CD4-positive, alpha-beta T cell (primary cell): ENCODE measurements at regions of chr19 and their contacts with region 1.

Region 1: DNA sequence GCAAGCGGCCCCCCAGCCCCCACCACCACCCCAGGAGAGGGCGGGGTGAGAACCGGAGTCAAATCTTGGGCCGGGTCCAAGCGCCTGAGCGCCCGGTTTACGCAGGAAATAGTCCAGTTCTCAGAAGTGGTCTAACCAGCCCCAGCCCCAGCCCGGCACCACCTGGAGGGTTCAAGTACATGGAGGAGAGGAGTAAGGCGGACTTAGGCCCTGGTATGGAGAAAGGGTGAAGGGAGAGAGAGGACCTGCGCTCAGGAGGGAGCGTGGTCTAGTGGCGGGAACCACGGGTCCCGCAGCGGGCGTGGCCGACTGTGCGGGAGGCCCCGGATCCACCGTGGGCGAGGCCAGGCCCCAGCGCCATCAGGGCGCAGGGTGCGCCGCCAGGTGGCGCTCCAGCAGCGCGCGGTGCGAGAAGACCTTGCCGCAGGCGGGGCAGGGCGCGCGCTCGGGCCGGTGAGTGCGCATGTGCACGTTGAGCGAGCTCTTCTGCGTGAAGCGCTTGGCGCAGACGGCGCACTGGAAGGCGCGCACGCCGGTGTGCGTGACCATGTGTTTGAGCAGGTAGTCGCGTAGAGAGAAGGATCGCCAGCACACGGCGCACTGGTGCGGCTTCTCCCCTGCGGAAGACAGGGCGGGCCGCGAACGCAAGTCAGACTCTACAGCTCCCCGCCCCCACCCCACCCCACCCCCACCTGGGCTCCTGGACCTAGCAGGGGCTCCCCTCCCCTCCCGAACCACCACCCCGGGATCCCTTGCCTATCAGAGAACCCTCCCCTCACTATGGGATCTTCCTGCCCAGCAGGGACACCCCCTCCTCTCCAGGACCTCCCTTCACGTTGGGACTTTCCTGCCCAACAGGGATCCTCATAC is 2.1 kb upstream of the SLC27A5 start:
- DNase-seq: peak; percentile 88 to 98 (median 94)
- ATAC-seq: peak; percentile 93
- H3K4me3 ChIP-seq: peak overlapping the region; percentile 41
- H3K4me3 Mint-ChIP-seq: peak overlapping the region; percentile 82
- H3K27ac ChIP-seq: peak overlapping the region; percentile 56 to 58
- H3K27ac Mint-ChIP-seq: peak overlapping the region; percentile 78
- H3K4me1 ChIP-seq: peaks cover 49% of the 10 kb centered on the region
- H3K4me1 Mint-ChIP-seq: peaks cover 36% of the 10 kb centered on the region
- H3K27me3 ChIP-seq: no peaks in the 10 kb centered on the region
- H3K27me3 Mint-ChIP-seq: no peaks in the 10 kb centered on the region
- CTCF ChIP-seq: peak; percentile 82

Region 2: DNA sequence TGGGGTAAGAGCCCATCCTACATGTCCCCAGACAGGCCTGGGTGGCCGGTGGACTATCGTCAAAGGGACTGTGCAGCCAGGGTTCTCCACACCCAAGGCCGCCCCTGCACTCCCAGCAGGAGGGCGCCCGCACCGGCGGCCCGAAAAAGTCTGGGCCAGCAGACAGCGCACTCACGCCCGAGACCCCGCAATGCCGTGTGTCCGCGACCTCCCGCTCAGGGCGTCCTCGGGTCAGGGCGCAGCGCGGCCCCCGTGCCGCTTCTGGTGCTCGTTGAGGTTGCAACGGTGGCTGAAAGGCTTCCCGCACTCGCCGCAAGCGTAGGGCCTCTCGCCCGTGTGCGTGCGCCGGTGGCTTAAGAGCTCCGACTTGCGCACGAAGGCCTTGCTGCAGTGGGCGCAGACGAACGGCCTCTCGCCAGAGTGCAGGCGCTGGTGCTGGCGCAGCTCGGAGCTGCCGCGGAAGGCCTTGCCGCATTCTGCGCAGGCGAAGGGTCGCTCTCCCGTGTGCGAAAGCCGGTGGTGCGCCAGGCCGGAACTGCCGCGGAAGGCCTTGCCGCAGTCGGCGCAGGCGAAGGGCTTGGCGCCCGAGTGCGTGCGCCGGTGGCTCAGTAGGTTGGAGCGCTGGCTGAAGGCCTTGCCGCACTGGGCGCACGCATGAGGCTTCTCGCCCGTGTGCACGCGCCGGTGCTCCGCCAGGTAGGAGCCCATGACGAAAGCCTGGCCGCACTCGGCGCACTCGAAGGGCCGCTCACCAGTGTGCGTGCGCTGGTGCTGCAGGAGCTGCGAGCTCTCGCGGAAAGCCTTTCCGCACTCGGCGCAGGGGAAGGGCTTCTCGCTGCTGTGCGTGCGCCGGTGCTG is 157.8 kb before region 1 on chr19:
- CTCF ChIA-PET with region 1: no interaction called
- POLR2A ChIA-PET with region 1: no interaction called
- intact Hi-C with region 1: no loop called
- DNase-seq: peak in 13 of 14 experiments; percentile 15 to 72 (median 35)
- ATAC-seq: peak; percentile 76
- H3K4me3 ChIP-seq: peak overlapping the region; percentile 41
- H3K4me3 Mint-ChIP-seq: peak overlapping the region; percentile 51
- H3K27ac ChIP-seq: no peak overlapping the region
- H3K27ac Mint-ChIP-seq: no peak overlapping the region
- H3K4me1 ChIP-seq: peaks cover 31% of the 10 kb centered on the region
- H3K4me1 Mint-ChIP-seq: peaks cover 8% of the 10 kb centered on the region
- H3K27me3 ChIP-seq: peaks cover 0 to 2% of the 10 kb centered on the region in 2 experiments
- H3K27me3 Mint-ChIP-seq: no peaks in the 10 kb centered on the region
- CTCF ChIP-seq: no peak

Region 3: GRCh38 chr19:58543826-58544590 is 30.1 kb after region 1 on chr19 and contains the start of gene TRIM28:
- CTCF ChIA-PET with region 1: interaction called, 34 read pairs
- POLR2A ChIA-PET with region 1: interaction called, 56 read pairs
- intact Hi-C with region 1: loop called (anchors 1 kb)
- DNase-seq: peak; percentile 99 to 100 (median 100)
- ATAC-seq: peak; percentile 87
- H3K4me3 ChIP-seq: peak within 1 kb of the TSS; percentile 70
- H3K4me3 Mint-ChIP-seq: peak within 1 kb of the TSS; percentile 95
- H3K27ac ChIP-seq: peak within 1 kb of the TSS; percentile 79 to 88
- H3K27ac Mint-ChIP-seq: peak within 1 kb of the TSS; percentile 95
- H3K4me1 ChIP-seq: peaks cover 41% of the 10 kb centered on the region
- H3K4me1 Mint-ChIP-seq: peaks cover 40% of the 10 kb centered on the region
- H3K27me3 ChIP-seq: no peaks in the 10 kb centered on the region
- H3K27me3 Mint-ChIP-seq: no peaks in the 10 kb centered on the region
- CTCF ChIP-seq: no peak
- total RNA-seq, gene TRIM28: 549 to 553 TPM

Region 4: DNA sequence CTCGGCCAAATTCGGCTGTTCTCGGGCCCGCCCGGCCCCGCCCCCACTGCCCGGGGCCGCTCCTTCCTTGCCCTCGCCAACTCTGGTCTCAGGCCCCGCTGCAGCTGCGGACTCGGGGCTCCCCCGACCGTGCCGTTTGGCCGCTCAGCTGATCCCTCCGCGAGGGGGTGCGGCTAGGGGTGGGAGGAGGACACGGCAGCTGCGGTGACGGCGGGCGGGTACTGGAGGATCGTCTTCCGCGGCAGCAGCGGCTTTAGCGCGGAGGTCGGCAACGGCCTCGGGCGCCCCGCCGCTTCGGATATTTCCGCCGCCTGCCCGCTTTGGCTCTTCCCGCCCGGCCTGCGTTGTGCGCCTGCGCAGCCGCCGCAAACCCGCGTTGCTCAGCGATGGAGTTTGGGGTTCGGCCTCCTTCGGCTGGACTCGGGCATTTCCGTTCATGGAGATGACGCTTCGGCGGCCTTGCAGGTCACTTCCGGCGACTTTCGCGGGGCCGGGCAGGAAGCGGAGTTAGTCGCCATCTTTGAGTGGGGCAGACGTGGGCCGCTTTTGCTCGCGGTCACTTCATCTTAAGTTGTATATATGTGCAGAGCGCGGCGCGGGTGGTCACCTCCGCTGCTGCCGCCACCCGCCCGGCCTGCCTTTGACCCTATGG is 44.8 kb after region 1 on chr19:
- CTCF ChIA-PET with region 1: interaction called, 26 read pairs
- POLR2A ChIA-PET with region 1: interaction called, 29 read pairs
- intact Hi-C with region 1: loop called in 1 of 2 experiments (anchors 1 kb)
- DNase-seq: peak; percentile 99 to 100 (median 100)
- ATAC-seq: peak; percentile 70
- H3K4me3 ChIP-seq: peak overlapping the region; percentile 76
- H3K4me3 Mint-ChIP-seq: peak overlapping the region; percentile 98
- H3K27ac ChIP-seq: peak overlapping the region; percentile 88 to 96
- H3K27ac Mint-ChIP-seq: peak overlapping the region; percentile 96
- H3K4me1 ChIP-seq: peaks cover 90% of the 10 kb centered on the region
- H3K4me1 Mint-ChIP-seq: peaks cover 82% of the 10 kb centered on the region
- H3K27me3 ChIP-seq: no peaks in the 10 kb centered on the region
- H3K27me3 Mint-ChIP-seq: no peaks in the 10 kb centered on the region
- CTCF ChIP-seq: no peak

Region 5: GRCh38 chr19:58572818-58573657 is 59.1 kb after region 1 on chr19 and contains the start of gene MZF1:
- CTCF ChIA-PET with region 1: interaction called, 22 read pairs
- POLR2A ChIA-PET with region 1: interaction called, 27 read pairs
- intact Hi-C with region 1: loop called (anchors 2 kb)
- DNase-seq: peak; percentile 98 to 100 (median 100)
- ATAC-seq: peak; percentile 72
- H3K4me3 ChIP-seq: peak within 1 kb of the TSS; percentile 84
- H3K4me3 Mint-ChIP-seq: peak within 1 kb of the TSS; percentile 92
- H3K27ac ChIP-seq: peak within 1 kb of the TSS; percentile 100
- H3K27ac Mint-ChIP-seq: peak within 1 kb of the TSS; percentile 96
- H3K4me1 ChIP-seq: peaks cover 49% of the 10 kb centered on the region
- H3K4me1 Mint-ChIP-seq: peaks cover 36% of the 10 kb centered on the region
- H3K27me3 ChIP-seq: no peaks in the 10 kb centered on the region
- H3K27me3 Mint-ChIP-seq: no peaks in the 10 kb centered on the region
- CTCF ChIP-seq: no peak
- total RNA-seq, gene MZF1: 21.0 to 21.1 TPM

Region 6: DNA sequence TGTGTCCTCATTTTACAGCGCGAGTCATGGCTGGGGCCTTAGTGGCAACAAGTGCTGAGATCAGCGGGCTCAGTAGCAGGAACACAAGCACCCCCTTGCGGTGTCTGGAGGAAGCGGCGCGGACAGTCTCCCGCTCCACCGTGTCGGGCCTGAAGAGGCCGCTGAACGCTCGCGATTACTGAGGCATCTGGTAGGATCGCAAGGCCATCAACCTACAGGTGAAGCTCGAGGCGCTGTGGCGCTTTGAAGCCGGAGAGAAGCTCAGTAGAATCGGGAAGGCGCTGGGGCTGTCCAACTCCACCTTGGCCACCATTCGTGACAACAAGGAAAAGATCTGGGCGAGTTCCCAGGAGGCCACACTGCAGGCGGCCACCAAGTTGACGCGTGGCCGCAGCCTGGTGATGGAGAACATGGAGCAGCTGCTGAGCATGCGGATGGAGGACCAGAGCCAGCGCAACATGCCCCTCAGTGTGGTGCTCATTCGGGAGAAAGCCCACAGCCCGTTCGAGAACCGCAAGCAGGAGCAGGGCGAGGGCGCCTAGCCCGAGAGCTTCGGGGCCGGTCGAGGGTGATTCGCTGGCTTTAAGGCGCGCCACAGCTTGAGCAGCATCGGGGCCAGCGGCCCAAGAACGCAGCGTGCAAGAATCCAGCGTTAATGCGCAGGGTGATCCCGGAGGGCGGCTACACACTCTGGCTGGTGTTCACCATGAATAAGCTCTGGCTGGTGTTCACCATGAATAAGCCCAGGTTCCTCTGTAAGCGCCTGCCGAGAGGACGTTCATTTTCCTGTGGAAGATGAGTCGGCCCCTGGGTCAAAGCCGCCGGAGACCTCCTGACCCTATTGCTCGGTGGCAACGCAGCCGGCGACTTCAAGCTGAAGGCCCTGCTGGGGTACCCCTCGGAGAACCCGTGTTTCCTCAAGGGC is 67.6 kb after region 1 on chr19:
- CTCF ChIA-PET with region 1: interaction called, 60 read pairs
- POLR2A ChIA-PET with region 1: interaction called, 19 read pairs
- intact Hi-C with region 1: loop called (anchors 1 kb)
- DNase-seq: peak; percentile 85 to 94 (median 89)
- ATAC-seq: peak; percentile 100
- H3K4me3 ChIP-seq: no peak overlapping the region
- H3K4me3 Mint-ChIP-seq: peak overlapping the region; percentile 59
- H3K27ac ChIP-seq: peak overlapping the region in 1 of 2 donors; percentile 35
- H3K27ac Mint-ChIP-seq: peak overlapping the region; percentile 77
- H3K4me1 ChIP-seq: peaks cover 9% of the 10 kb centered on the region
- H3K4me1 Mint-ChIP-seq: peaks cover 26% of the 10 kb centered on the region
- H3K27me3 ChIP-seq: no peaks in the 10 kb centered on the region
- H3K27me3 Mint-ChIP-seq: no peaks in the 10 kb centered on the region
- CTCF ChIP-seq: peak; percentile 93